Cardiac septum (tissue), 1 donor: ENCODE measurements at regions of chr3 and their contacts with region 1.

Region 1: GRCh38 chr3:53114011-53114400 is 16.2 kb downstream of the RFT1 start:
- DNase-seq: peak; percentile 92

Region 2: GRCh38 chr3:53195602-53196574 is 81.9 kb after region 1 on chr3:
- intact Hi-C with region 1: loop called (anchors 1 kb)
- DNase-seq: peak; percentile 81